ENCODE measurements at regions of chr5 and their contacts with region 1.

Region 1: DNA sequence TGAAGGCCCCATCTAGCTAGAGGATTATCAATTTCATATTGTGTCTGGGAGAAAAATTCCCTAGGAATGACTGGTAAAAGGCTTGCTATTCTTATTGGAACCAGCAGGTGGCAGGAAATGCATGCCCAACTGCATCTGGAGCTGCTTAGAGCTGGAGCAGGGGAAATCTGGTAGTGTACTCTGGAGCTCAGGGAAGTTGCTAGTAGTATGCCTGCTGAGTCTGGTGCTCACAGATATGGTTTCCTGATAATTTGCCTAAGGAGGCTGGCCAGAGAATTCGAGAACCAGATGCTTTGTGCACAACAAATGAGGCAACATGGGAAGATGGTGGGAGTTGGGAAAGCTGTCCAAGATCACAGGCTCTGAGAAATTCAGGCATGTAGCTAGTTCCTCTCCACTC is 53.7 kb downstream of the G3BP1 start:
- DNase-seq: peak in 1 of 3 donors; percentile 26
- ATAC-seq: peak; percentile 85 to 87 (median 86)
- H3K4me3 ChIP-seq: no peak overlapping the region
- H3K27ac ChIP-seq: no peak overlapping the region
- H3K4me1 ChIP-seq: no peaks in the 10 kb centered on the region
- H3K27me3 ChIP-seq: no peaks in the 10 kb centered on the region
- CTCF ChIP-seq: peak; percentile 75 to 82 (median 80)
- POLR2A ChIP-seq: no peak

Region 2: DNA sequence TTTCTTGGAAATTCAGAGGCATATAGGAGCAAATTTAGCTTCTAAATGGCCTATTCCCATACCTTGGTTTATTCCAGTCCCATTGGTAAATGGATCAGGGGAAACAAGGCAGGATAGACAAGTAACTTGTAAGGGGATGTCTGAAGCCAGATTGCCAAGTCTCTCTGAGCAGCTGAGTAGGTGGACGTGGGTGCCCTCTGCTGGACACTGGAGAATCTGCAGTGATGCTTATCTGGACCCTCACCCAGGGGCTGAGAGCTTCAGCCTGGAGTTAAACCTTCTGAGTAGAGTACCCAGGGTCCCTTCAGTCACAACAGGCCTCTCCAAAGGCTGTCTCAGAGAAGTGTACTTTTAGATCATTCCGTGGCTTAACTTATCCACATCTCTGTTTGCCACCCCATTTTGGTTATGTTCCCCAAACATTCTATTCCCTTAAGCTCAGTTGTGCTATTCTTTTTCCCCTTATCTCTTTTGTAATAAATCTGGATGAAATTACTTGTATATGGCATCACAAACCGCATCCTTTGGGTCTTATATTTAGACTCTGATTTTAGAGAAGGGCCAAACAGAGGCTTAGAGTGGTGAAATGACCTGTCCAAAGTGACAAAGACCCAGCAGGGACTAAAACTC is 317.5 kb after region 1 on chr5:
- intact Hi-C with region 1: loop called in 1 of 2 experiments (anchors 10 kb)
- DNase-seq: peak in 2 of 3 donors; percentile 41 to 53
- ATAC-seq: peak; percentile 72 to 86 (median 81)
- H3K4me3 ChIP-seq: no peak overlapping the region
- H3K27ac ChIP-seq: no peak overlapping the region
- H3K4me1 ChIP-seq: no peaks in the 10 kb centered on the region
- H3K27me3 ChIP-seq: no peaks in the 10 kb centered on the region
- CTCF ChIP-seq: peak; percentile 64 to 89 (median 84)
- POLR2A ChIP-seq: no peak

Measured in right lobe of liver (tissue), 6 donors.